Left ventricle myocardium inferior (tissue), 1 donor: ENCODE measurements at regions of chr1 and their contacts with region 1.

Region 1: GRCh38 chr1:37434292-37434907 is 40.0 kb upstream of the ZC3H12A start:
- DNase-seq: peak; percentile 59
- H3K4me3 ChIP-seq: no peak overlapping the region
- H3K27ac ChIP-seq: no peak overlapping the region
- H3K4me1 ChIP-seq: no peaks in the 10 kb centered on the region
- H3K27me3 ChIP-seq: peaks cover 94% of the 10 kb centered on the region
- CTCF ChIP-seq: peak; percentile 93

Region 2: DNA sequence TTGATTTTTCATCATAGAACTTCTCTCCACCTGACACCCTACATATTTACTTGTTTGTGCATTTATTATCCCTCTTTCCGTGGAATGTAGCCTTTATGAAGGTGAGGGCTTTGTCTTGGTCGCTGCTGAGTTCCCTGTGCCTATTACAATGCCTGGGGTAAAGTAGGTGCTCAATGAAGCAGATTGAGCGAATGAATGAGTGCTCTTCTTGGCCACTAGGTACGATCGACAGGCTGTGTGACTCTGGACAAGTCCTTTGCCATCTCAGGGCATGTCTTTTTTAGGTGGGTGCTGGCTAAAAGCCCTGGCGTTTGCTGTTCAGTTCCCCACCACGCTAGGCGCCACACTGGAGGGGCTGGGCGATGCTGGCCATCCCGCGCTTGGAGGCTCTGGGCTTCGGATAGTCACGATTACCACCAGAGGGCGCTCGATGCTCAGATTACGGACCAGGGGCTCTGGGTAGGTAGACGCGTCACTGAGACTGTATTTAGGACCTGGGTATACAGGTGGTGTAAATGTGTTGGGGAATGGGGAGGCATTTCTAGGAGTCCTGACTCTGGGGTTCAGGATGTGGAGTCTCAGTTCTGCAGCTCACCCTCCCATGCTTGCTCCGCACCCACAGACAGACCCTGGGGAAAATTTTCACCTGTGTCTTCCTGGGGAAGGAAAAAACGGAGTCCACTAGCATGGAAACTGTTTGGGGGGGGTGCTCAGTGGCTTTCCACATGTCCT is 880.6 kb before region 1 on chr1:
- intact Hi-C with region 1: loop called (anchors 10 kb)
- DNase-seq: peak; percentile 46
- H3K4me3 ChIP-seq: no peak overlapping the region
- H3K27ac ChIP-seq: no peak overlapping the region
- H3K4me1 ChIP-seq: no peaks in the 10 kb centered on the region
- H3K27me3 ChIP-seq: peaks cover 98% of the 10 kb centered on the region
- CTCF ChIP-seq: peak; percentile 69

Region 3: DNA sequence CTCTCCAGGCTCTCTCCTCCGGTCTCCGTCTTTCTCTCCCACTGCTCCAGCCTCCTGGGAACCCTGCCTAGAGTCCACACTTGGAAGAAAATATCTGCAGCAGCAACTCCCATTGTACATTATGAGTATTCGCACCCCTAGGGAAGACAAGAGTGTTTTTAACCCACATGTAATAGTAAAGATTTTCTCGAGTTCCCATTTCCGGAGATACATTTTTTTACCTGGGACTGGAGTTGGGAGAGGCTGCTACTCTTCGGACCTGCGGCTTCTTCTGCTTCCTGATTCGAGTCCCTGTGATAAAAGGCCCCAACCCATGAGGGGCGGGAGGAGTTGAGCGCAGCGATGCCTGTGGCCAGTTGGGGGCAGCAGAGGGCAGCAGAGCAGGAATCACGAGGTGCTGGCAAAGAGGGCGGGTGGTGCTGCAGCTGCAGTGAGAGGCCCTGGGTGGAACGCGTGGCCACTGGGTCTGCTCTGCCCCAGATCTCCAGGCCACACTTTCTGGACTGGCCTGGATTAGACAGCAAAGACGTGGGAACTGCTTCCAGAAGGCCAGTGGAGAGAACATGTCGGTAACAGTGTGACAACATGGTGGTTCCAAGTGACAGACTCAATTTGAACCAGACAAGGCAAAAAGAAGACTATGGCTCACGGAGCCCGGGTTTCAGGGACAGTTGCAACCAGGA is 730.7 kb before region 1 on chr1:
- intact Hi-C with region 1: loop called (anchors 10 kb)
- DNase-seq: peak; percentile 71
- H3K4me3 ChIP-seq: no peak overlapping the region
- H3K27ac ChIP-seq: no peak overlapping the region
- H3K4me1 ChIP-seq: peaks cover 3% of the 10 kb centered on the region
- H3K27me3 ChIP-seq: peaks cover 95% of the 10 kb centered on the region
- CTCF ChIP-seq: peak; percentile 88

Region 4: DNA sequence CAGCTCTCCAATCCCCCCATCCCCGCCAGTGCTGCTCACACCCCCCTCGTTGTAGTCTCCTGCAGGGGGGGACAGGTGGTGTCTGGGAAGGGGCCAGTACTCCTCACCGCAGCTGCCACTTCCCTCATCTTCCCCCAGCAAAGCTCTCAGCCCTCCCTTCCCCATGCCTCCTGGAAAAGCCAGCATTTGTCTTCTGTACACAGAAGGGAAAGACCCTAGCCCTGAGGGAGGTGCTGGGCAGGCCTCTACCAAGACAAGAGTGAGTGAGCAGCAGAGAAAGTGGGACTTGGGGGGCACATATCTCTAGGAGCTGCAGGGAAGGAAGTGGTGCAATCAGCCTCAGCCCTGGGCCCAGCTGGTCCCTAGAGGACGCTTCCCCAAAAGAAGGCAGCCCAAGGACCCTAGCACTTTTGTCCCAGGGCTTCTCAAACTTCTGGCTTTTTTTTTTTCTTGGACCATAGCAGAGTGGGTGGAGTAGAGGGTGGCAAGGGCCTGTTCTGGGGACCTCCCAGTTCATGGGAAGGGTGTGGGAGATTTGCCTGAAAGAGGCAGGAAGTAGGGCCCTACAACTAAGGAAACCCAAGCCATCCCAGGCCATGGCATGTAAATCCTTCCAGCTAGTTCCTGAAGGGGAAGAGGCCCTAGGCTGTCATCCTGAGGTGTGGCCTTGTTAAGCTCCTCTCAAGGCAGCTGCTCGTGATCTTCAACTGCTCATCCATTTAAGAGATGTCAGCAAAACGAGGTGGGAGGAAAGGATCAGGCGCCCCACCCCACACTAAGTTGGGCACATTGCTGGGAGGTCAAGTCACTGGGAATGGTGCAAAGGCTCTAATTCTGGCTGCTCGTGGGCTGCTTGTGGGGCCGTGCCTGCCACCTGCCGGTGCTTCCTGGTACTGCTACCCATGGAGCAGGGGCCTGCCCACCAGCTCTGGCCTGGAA is 52.5 kb after region 1 on chr1:
- intact Hi-C with region 1: no loop called
- DNase-seq: peak; percentile 79
- H3K4me3 ChIP-seq: no peak overlapping the region
- H3K27ac ChIP-seq: peak overlapping the region; percentile 70
- H3K4me1 ChIP-seq: peaks cover 40% of the 10 kb centered on the region
- H3K27me3 ChIP-seq: no peaks in the 10 kb centered on the region
- CTCF ChIP-seq: peak; percentile 99

Region 5: GRCh38 chr1:37655274-37655673 is 220.9 kb after region 1 on chr1:
- intact Hi-C with region 1: no loop called
- DNase-seq: no peak
- H3K4me3 ChIP-seq: no peak overlapping the region
- H3K27ac ChIP-seq: no peak overlapping the region
- H3K4me1 ChIP-seq: no peaks in the 10 kb centered on the region
- H3K27me3 ChIP-seq: peaks cover 55% of the 10 kb centered on the region
- CTCF ChIP-seq: no peak